ENCODE measurements at regions of chr1 and their contacts with region 1.

Region 1: GRCh38 chr1:228860911-228861831 is 125.9 kb downstream of the RHOU start:
- DNase-seq: peak; percentile 89 to 94
- ATAC-seq: peak; percentile 97
- H3K4me3 ChIP-seq: peak overlapping the region; percentile 12; the same call in 2 of the 3 replicates
- H3K27ac ChIP-seq: peak overlapping the region; percentile 78 to 86
- H3K4me1 ChIP-seq: peaks cover 58% of the 10 kb centered on the region
- CTCF ChIP-seq: no peak
- EP300 ChIP-seq: peak; percentile 58 to 81; a peak in 3 of 5 replicates
- POLR2A ChIP-seq: no peak
- RAD21 ChIP-seq: peak; percentile 42 to 64

Region 2: DNA sequence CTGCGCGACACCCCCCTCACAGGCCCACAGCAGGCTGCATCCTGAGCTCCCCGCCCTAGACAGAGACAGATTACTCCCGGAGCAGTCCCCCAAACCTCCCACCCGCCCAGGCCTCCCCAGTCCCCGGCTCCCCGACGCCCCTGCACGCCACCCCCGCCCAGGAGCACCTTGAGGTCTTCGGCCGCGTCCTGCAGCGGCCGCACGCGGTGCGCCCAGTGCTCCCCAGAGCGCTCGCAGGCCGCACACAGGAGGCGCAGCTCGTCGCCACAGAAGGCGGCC is 455.2 kb before region 1 on chr1:
- CTCF ChIA-PET with region 1: no interaction called
- POLR2A ChIA-PET with region 1: interaction called, 13 read pairs
- DNase-seq: no peak
- ATAC-seq: peak in 1 of 2 experiments; percentile 13; a peak in 3 of 6 replicates
- H3K4me3 ChIP-seq: peak overlapping the region; percentile 97
- H3K27ac ChIP-seq: peak overlapping the region; percentile 94
- H3K4me1 ChIP-seq: peaks cover 30% of the 10 kb centered on the region
- CTCF ChIP-seq: no peak
- EP300 ChIP-seq: no peak
- POLR2A ChIP-seq: no peak
- RAD21 ChIP-seq: no peak

Region 3: DNA sequence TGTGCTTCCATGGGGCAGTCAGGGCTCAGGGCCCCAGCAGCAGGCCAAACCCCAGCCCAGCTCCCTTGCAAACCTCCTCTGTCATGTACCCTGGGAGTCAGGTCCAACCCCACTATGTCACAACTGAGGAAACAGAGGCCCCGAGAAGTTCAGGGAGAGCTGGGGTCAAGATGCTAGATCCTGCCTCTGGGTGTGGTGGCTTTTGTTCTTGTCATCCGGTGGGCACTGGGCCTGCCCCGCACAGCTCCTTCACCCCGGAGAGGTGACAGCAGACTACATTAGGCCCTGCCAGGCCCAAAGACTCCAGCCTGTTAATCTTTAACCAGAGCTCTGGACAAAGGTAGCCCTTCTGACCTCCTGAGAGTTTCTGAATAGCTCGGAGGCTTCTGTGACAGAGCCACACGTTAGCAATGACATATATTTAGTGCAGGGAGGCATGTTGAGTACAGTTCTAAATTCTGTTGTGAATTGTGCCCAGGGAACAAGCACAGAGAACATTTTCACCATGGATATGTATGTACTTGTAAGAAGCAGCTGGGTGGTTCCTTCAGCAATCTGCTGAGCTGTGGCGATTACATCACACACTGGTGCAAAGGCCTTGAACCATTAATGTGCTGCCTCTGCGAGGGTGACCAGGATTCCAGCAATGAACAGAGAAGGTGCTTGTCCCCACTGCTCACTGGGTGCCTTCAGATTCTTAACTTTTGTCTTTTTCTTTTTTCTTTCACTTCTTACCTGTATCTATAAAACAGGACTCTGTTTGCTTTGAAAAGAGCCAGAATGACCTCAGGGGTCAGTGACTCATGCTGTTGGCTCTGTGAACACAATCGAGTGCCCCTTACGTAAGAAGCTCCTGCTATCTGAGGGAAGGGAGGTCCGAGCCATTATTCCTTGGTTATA is 23.1 kb before region 1 on chr1:
- CTCF ChIA-PET with region 1: interaction called, 4 read pairs
- POLR2A ChIA-PET with region 1: interaction called, 13 read pairs
- DNase-seq: peak; percentile 88 to 96
- ATAC-seq: peak; percentile 82 to 83
- H3K4me3 ChIP-seq: peak overlapping the region; percentile 20; the same call in 2 of the 3 replicates
- H3K27ac ChIP-seq: peak overlapping the region; percentile 91 to 94
- H3K4me1 ChIP-seq: peaks cover 67% of the 10 kb centered on the region
- CTCF ChIP-seq: no peak
- EP300 ChIP-seq: peak; percentile 45 to 51; a peak in 2 of 5 replicates
- POLR2A ChIP-seq: no peak
- RAD21 ChIP-seq: peak in 1 of 2 experiments; percentile 22; a peak in 2 of 5 replicates

Region 4: DNA sequence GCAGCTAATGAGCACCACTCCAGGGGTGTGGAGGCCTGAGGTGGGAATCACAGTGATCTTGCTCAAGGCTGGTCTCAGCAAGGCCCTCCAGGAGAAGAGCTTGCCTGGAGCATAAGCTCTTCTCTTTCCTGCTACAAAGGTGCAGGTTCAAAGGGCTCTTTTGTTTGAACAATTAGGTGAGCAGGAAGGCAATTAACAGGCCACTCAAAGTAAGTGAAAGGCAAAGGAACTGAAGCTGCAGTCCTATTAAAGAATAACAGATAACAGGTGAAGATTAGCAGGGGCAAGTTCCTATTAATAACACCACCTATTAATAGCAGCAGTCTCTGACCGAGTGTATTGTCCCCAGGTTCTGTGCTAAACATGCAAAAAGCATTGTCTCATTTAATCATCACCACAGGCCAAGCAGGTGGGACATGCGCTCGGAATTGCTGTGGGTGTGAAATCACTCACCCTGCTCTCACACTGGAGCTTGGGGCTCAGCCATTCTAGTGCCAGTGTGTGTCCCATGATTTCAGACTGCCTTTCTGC is 12.1 kb before region 1 on chr1:
- CTCF ChIA-PET with region 1: interaction called, 7 read pairs
- POLR2A ChIA-PET with region 1: interaction called, 10 read pairs
- DNase-seq: no peak
- ATAC-seq: no peak
- H3K4me3 ChIP-seq: no peak overlapping the region
- H3K27ac ChIP-seq: peak overlapping the region; percentile 83 to 88
- H3K4me1 ChIP-seq: peaks cover 58% of the 10 kb centered on the region
- CTCF ChIP-seq: no peak
- EP300 ChIP-seq: no peak
- POLR2A ChIP-seq: no peak
- RAD21 ChIP-seq: no peak

Measured in A549 (cell line).